Activated CD8-positive, alpha-beta T cell treated with anti-CD3 and anti-CD28 coated beads, Interleukin-2, amount 10 ng/mL, durations not matched to agents 7 days and 5 days (primary cell): ENCODE measurements at regions of chr11 and their contacts with region 1.

Region 1: DNA sequence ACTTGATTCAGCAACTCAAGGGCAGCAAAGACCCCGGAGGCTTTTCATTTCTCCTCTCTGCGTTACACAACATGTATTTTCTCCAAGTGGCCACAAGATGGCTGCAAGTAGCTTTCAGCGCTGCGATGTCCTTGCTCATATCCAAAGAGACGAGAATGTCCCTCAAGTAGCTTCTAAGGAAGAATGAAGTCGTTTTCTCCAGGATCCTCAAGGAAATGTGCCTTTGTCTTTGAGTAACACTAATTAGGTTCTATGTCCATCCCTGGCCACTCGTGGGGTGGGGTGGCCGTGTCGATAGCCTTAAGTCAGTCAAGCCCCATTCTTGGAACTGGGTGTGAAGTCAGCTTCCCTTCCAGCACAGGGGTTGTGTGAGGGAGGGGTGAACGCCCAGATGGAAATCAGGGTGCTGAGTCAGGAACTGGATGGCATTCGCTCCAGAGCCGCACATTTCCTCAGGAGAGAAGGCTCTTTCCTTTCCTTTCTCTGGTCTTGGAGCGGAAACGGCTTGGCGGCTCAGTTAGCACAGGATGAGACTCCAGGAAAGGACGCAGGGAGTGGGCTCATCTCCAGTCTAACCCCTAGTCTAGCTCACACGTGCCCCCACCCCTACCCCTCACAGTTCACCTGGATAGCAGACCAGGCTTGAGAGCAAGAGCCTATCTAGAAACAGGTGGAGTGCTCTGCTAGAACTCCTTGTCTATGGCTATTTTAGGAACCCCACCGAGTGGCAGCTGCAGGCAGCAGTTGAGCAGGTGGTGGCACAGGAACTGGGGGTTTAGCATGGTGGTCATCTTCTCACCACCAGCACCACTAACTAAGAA is 44.3 kb downstream of the NNMT start:
- DNase-seq: peak; percentile 53
- ATAC-seq: peak; percentile 79
- H3K4me3 Mint-ChIP-seq: peak overlapping the region; percentile 16
- H3K27ac Mint-ChIP-seq: no peak overlapping the region
- H3K4me1 Mint-ChIP-seq: peaks cover 8% of the 10 kb centered on the region
- H3K27me3 Mint-ChIP-seq: peaks cover 20% of the 10 kb centered on the region

Region 2: DNA sequence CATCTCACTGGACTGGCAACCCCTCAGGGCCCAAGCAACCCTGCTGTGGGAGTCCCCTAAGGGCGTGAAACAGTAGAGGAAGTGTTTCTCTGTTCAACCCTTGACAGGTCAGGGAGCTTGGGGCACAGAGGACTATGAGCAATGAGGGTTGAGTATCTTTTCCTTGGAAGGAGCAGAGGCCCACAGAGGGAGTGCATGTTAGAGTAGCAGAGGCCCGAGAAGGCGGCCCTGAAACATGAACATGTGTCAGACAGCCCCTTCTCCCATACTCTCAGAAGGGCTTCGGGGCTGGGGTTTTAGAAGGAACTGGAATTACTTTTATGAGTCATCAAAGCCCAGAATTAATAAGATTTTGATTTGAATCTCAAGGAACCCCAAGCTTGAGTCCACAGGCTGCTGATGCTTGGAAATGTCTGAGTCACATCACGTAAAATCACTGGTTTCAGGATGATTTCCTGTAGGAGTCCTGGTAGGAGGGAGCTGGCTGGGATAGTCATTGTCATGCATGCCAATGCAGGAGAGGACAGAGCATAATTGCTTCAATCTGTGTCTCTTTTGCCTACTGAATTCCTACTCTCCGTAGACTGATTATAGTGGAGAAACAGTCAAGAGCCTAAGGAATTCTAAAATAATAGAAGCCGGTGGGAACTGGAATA is 37.2 kb after region 1 on chr11:
- CTCF ChIA-PET with region 1: interaction called, 12 read pairs
- POLR2A ChIA-PET with region 1: no interaction called
- DNase-seq: no peak
- ATAC-seq: no peak
- H3K4me3 Mint-ChIP-seq: no peak overlapping the region
- H3K27ac Mint-ChIP-seq: no peak overlapping the region
- H3K4me1 Mint-ChIP-seq: no peaks in the 10 kb centered on the region
- H3K27me3 Mint-ChIP-seq: peaks cover 23% of the 10 kb centered on the region